Activated T-helper 2 cell treated with anti-CD3 and anti-CD28 coated beads, Interferon-gamma antibody, Interleukin-2, Interleukin-4, amounts not matched to agents 10 μg/mL and 5 μg/mL and 100 μg/mL, durations not matched to agents 14 hours and 24 hours and 36 hours (primary cell): ENCODE measurements at regions of chr9 and their contacts with region 1.

Region 1: GRCh38 chr9:8115570-8115969 is 316.0 kb upstream of the DMAC1 start:
- DNase-seq: peak; percentile 8
- H3K4me3 Mint-ChIP-seq: peak overlapping the region; percentile 35
- H3K27ac Mint-ChIP-seq: peak overlapping the region; percentile 88
- H3K4me1 Mint-ChIP-seq: peaks cover 27% of the 10 kb centered on the region
- H3K27me3 Mint-ChIP-seq: no peaks in the 10 kb centered on the region

Region 2: DNA sequence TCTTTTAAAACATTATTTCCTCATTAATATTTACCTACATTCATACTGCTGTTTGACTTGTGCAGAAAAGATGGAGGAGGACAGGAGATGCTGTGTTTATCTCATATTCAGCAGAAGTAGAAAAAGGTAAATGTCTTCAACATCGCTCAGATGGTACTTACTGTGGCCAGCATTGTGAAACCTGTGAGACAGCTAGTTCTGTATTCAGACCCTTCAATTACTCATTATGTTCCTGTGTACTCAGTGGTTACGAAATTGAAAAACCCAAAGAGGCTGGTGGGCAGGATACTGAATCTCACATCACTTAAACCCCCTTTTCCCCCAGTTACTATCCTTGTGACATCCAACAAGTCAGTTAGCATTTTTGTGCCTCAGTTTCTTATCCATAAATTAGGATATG is 1141.8 kb before region 1 on chr9:
- intact Hi-C with region 1: loop called (anchors 10 kb)
- DNase-seq: no peak
- H3K4me3 Mint-ChIP-seq: no peak overlapping the region
- H3K27ac Mint-ChIP-seq: no peak overlapping the region
- H3K4me1 Mint-ChIP-seq: peaks cover 21% of the 10 kb centered on the region
- H3K27me3 Mint-ChIP-seq: no peaks in the 10 kb centered on the region

Region 3: GRCh38 chr9:7799234-7799943 is 316.2 kb before region 1 on chr9 and contains the start of gene DMAC1:
- intact Hi-C with region 1: loop called (anchors 10 kb)
- DNase-seq: peak; percentile 70
- H3K4me3 Mint-ChIP-seq: peak within 1 kb of the TSS; percentile 90
- H3K27ac Mint-ChIP-seq: peak within 1 kb of the TSS; percentile 89
- H3K4me1 Mint-ChIP-seq: peaks cover 23% of the 10 kb centered on the region
- H3K27me3 Mint-ChIP-seq: no peaks in the 10 kb centered on the region
- total RNA-seq, gene DMAC1: 50.5 and 51.0 TPM in 2 replicates

Region 4: DNA sequence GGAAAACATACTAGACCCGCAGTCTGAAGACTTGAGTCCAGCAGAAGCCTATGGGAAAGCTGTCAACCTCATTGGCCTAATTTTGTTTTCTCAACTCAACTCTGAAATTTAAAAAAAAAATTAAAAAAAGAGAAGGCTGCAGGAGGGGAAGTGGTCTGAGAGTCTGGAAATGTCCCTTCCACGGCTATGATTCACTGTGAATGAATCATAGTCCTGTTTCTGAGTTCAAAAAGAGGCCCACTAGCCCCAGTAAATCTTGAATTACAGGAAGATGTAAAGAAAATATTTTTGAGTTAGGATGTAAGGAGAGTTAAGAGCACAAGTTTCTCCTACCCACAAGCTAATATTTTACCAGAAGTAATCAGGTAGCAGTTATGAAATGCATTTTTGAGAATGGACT is 249.5 kb after region 1 on chr9:
- intact Hi-C with region 1: loop called (anchors 2 kb)
- DNase-seq: no peak
- H3K4me3 Mint-ChIP-seq: no peak overlapping the region
- H3K27ac Mint-ChIP-seq: peak overlapping the region; percentile 4
- H3K4me1 Mint-ChIP-seq: peaks cover 12% of the 10 kb centered on the region
- H3K27me3 Mint-ChIP-seq: no peaks in the 10 kb centered on the region